ENCODE measurements at regions of chrX and their contacts with region 1.

Region 1: DNA sequence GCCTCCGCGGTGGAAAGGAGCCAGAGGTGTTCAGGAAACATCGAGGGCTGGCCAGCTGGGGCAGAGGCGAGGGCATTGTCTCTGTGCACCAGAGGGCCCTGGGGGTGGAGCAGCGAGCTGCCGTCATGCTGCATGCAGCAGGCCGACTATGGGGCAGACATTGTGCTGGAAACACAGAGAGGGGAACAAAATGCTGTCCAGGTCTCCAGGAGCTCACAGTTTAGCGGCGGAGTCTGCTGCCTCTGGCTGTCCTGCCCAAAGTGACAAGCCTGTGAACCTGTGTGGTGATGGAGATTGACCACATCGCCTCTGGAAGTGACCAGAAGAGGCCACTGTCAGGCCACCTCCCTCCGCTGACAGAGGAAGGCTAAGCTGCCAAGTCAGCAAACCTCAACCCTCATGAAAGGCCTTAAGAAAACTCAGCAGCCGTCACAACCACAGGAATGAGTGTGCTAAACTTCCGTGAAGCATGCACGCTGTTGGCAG is 20.1 kb upstream of the SASH3 start:
- DNase-seq: peak in 1 of 2 experiments; percentile 63
- H3K4me3 ChIP-seq: no peak overlapping the region
- H3K27ac ChIP-seq: no peak overlapping the region
- H3K4me1 ChIP-seq: no peaks in the 10 kb centered on the region
- H3K27me3 ChIP-seq: no peaks in the 10 kb centered on the region
- CTCF ChIP-seq: no peak

Region 2: DNA sequence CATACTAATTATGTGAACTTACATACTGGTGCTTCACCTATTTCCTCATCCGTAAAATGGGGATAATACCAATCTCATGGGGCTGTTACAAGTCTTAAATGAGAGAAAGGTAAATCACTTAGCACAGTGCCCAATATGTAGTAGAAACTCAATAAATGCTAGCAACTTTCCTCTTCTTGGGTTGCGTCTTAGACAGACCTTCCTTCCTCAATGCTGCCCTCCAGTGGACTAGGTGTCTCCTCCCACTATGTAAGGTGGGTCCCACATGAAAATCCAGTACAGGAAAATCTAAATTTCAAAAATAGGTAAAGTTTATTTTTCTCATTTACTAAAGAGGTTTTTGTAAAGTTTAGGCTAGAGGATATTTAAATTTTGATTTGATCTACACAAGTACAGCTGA is 63.5 kb after region 1 on chrX:
- CTCF ChIA-PET with region 1: interaction called, 3 read pairs
- POLR2A ChIA-PET with region 1: no interaction called
- intact Hi-C with region 1: loop called (anchors 1 kb)
- DNase-seq: peak in 1 of 2 experiments; percentile 18
- H3K4me3 ChIP-seq: no peak overlapping the region
- H3K27ac ChIP-seq: no peak overlapping the region
- H3K4me1 ChIP-seq: no peaks in the 10 kb centered on the region
- H3K27me3 ChIP-seq: no peaks in the 10 kb centered on the region
- CTCF ChIP-seq: peak; percentile 68

Region 3: GRCh38 chrX:129843459-129844306 is 84.1 kb after region 1 on chrX and contains the start of gene ZDHHC9:
- CTCF ChIA-PET with region 1: interaction called, 10 read pairs
- POLR2A ChIA-PET with region 1: no interaction called
- intact Hi-C with region 1: no loop called
- DNase-seq: peak; percentile 86 to 96
- H3K4me3 ChIP-seq: peak within 1 kb of the TSS; percentile 90
- H3K27ac ChIP-seq: peak within 1 kb of the TSS; percentile 97
- H3K4me1 ChIP-seq: peaks cover 52% of the 10 kb centered on the region
- H3K27me3 ChIP-seq: no peaks in the 10 kb centered on the region
- CTCF ChIP-seq: 0 out of 2 replicates have a peak, but pooled peaks have one; percentile 25
- total RNA-seq, gene ZDHHC9: 84.2 and 108 TPM in 2 replicates

Measured in PC-9 (cell line).